ENCODE measurements at regions of chr6 and their contacts with region 1.

Region 1: DNA sequence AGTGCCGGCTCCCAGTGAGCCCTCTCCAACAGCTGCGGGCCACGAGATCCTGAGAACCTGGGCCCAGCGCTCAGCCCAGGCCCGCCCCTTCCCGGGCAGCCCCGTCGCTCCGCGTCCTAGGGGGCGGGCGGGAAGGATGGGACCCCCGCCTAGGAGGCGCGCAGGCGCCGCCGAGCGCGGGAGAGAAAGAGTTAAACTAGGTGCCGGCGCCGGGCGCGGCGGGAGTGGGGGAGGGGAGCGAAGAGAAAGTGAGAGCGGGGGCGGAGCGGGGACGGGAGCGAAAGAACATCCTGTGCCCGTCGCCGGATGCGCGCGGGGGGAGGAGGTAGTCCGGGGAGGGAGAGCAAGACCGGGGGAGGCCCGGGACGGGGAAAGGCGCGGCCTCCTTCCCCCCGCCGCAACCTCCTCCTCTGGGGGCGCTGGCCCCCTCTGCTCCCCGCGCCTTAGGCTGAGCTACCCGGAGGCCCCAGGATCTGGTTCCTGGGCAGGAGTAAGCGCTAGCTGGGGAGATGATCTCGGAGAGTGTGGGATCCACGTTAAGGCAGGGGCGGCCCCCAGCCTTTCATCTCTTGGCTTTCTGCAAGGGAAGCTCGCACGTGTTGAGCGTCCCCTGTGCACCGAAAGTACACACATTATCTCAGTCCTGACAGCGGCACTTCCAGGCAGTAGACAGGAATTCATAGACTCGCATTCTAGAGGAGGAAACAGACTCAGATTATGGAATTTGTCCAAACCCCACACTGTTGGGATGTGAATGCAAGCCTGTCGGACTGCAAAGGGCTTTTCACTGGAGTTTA is 4.9 kb upstream of the ARMC12 start:
- DNase-seq: peak; percentile 96
- ATAC-seq: peak; percentile 53
- H3K4me3 ChIP-seq: peak overlapping the region; percentile 63 to 88 (median 74)
- H3K27ac ChIP-seq: peak overlapping the region; percentile 87
- H3K4me1 ChIP-seq: peaks cover 64% of the 10 kb centered on the region
- H3K27me3 ChIP-seq: no peaks in the 10 kb centered on the region; a peak in 1 of 5 replicates
- CTCF ChIP-seq: peak; percentile 48
- EP300 ChIP-seq: peak in 1 of 2 experiments; percentile 71; a peak in 1 of 4 replicates
- POLR2A ChIP-seq: peak in 1 of 2 experiments; percentile 80; a peak in 2 of 4 replicates
- RAD21 ChIP-seq: peak; percentile 15

Region 2: DNA sequence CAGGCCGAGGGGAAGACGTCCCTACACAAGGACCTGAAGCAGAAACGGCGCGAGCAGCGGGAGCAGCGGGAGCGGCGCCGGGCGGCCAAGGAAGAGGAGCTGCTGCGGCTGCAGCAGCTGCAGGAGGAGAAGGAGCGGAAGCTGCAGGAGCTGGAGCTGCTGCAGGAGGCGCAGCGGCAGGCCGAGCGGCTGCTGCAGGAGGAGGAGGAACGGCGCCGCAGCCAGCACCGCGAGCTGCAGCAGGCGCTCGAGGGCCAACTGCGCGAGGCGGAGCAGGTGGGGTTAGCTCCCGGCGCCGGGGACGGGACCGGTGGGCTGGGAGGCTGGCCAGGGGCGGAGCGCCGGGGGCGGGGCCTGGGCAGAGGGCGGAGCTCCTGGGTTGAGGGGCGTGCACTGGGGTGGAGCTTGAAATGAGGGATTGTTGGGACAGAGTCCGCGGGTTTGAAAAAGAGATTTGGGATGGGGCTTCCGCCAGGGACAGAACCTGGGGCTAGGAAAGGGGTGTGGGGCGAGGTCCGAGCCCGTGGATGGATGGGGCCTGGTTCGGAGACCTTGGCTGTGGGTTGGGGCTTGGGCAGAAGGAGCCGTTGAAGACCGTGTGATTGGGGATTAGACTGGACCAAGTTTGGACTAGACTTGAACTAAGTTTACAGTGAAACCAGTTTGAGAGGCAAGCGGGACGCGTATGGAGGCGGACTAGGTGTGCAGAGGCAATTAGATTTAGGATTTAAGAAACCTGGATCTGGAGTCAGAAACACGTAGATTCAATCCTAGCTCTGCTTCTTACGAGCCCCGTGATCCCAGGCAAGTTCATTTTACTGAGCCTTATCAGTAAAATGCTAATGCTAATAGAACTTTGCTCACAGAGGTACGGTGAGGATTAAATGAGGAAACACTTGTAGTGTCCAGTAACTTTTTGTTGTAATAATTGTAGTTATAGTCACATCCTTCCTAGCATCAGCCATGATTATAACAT is 413.4 kb before region 1 on chr6:
- CTCF ChIA-PET with region 1: no interaction called
- POLR2A ChIA-PET with region 1: no interaction called
- in situ Hi-C with region 1: loop called (anchors 10 kb)
- intact Hi-C with region 1: no loop called
- DNase-seq: peak; percentile 86
- ATAC-seq: peak; percentile 98
- H3K4me3 ChIP-seq: peak overlapping the region; percentile 58 to 81 (median 61)
- H3K27ac ChIP-seq: peak overlapping the region; percentile 70
- H3K4me1 ChIP-seq: peaks cover 20% of the 10 kb centered on the region
- H3K27me3 ChIP-seq: no peaks in the 10 kb centered on the region
- CTCF ChIP-seq: peak; percentile 63
- EP300 ChIP-seq: peak; percentile 32 to 62; a peak in 1 of 4 replicates
- POLR2A ChIP-seq: peak; percentile 76 to 78
- RAD21 ChIP-seq: peak; percentile 45

Region 3: DNA sequence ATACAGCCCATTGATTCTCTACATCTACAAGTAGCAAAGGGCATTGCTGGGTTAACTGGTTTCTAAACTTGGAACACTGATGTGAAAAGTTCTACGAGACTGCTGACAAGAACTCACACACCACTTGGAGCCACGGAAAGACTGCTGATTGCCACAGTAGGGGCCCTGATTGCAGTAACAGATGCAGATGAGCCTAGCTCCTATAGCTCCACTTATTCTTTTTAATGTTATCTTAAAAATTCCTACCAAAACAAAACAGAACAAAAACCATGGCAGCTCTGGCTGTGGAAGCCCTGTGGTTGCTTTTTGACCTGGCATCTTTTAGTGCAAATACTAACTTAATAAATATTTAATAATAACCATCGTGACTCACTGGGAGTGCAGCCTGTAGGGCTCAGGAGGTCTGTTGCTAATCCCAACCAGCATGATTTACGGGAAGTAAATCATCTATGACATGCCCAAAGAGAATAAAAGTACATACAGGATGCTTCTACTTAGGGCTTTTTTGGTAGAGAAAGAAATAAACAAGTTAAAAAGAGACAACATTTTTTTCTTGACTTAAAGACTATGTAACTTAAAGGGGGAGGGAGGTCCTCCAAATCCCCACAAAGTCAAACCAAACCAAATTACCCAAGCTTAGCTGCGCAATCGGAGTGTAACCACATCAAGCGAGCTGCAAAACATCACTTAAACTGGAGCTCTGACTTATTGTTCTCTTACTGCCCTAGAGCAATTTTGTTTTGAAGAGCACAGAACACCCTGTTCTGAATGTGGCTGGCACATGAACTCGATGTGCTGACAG is 130.4 kb before region 1 on chr6:
- CTCF ChIA-PET with region 1: no interaction called
- POLR2A ChIA-PET with region 1: interaction called, 19 read pairs
- in situ Hi-C with region 1: no loop called
- intact Hi-C with region 1: no loop called
- DNase-seq: peak; percentile 63
- ATAC-seq: peak; percentile 59
- H3K4me3 ChIP-seq: peak overlapping the region; percentile 14 to 27 (median 23); a peak in 5 of 6 replicates
- H3K27ac ChIP-seq: peak overlapping the region; percentile 83
- H3K4me1 ChIP-seq: peaks cover 40% of the 10 kb centered on the region
- H3K27me3 ChIP-seq: no peaks in the 10 kb centered on the region
- CTCF ChIP-seq: no peak
- EP300 ChIP-seq: peak in 1 of 2 experiments; percentile 62; a peak in 1 of 4 replicates
- POLR2A ChIP-seq: no peak
- RAD21 ChIP-seq: no peak

Region 4: DNA sequence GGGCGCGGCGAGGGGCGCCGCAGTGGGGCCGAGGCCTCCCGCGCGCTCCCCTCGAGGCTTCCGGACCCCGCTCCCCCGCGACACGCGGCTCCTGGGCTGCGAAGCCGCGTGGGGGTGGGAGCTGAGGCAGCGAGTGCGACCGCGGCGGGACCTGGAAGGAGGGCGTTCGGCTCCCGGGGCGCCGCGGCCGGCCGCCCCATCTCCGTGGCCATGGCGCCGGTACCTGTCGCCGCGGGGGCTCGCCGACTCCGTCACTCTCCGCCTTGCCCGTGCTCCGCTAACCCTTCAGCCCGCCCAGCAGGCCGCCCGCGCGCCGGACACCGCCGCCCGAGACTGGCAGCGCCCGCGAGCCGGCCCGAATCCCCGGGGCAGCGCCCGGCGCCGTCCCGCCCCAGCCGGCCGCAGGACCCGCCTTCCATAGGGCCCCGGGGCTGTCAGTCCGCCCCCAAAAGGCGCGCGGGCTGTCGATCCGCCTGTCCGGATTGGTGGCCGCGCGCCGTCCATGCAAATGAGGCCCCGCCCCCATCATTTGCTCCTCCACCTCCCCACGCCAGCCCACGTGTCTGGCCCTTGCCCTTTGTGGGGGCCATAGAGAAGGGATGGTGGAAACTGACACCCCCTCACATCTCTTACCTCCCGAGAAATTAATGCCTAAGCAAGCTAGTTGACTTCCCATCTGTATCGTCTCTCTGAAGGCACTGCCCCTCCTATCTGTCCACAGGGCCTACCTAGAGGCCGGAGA is 43.2 kb before region 1 on chr6 and contains the start of gene FKBP5:
- CTCF ChIA-PET with region 1: interaction called, 5 read pairs
- POLR2A ChIA-PET with region 1: interaction called, 4 read pairs
- in situ Hi-C with region 1: loop called (anchors 5 kb)
- intact Hi-C with region 1: loop called (anchors 2 kb)
- DNase-seq: peak; percentile 89
- ATAC-seq: peak; percentile 95
- H3K4me3 ChIP-seq: peak within 1 kb of the TSS; percentile 63 to 96 (median 89)
- H3K27ac ChIP-seq: peak within 1 kb of the TSS; percentile 71
- H3K4me1 ChIP-seq: peaks cover 29% of the 10 kb centered on the region
- H3K27me3 ChIP-seq: no peaks in the 10 kb centered on the region; a peak in 1 of 5 replicates
- CTCF ChIP-seq: peak; percentile 25; the same call in 1 of the 2 replicates
- EP300 ChIP-seq: peak in 1 of 2 experiments; percentile 58; a peak in 1 of 4 replicates
- POLR2A ChIP-seq: peak; percentile 85 to 93
- RAD21 ChIP-seq: no peak; the same call in 1 of the 2 replicates
- total RNA-seq, gene FKBP5: 17.4 and 30.9 TPM in 2 replicates